ENCODE measurements at regions of chr13 and their contacts with region 1.

Region 1: DNA sequence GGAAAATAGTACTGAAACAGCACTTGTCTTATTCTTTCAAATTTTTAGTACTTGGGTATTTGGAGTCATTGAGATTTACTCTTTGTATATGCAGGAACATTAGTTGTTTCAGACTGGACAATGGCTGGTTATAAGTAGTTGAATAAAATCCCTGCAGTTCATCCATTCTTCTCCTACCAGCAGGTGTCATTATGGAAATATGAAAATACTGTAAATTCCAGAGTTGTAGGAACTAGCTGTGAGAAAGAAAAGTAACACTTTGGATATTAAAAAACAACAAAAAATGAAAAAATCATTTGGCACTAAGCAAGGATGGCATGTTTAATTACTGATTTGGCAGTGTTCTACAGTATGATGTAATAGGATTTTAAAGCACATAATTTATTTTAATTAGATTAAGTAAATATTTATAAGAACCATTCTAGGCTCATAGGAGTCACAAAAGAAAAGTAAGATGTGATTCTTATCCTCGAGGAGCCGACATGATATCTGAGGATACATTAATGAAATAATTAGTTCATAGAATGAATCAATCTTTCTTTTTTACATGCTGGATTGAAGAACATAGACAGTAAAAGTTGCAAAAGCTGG is 155.3 kb downstream of the KCNRG start:
- DNase-seq: no peak
- ATAC-seq: no peak
- H3K4me3 ChIP-seq: no peak overlapping the region
- H3K27ac ChIP-seq: no peak overlapping the region
- H3K4me1 ChIP-seq: no peaks in the 10 kb centered on the region
- H3K27me3 ChIP-seq: no peaks in the 10 kb centered on the region
- CTCF ChIP-seq: peak in 7 of 9 donors; percentile 27 to 58 (median 54)

Region 2: GRCh38 chr13:49342454-49342853 is 828.1 kb before region 1 on chr13:
- intact Hi-C with region 1: loop called in 1 of 10 experiments (anchors 5 kb)
- DNase-seq: no peak
- ATAC-seq: no peak
- H3K4me3 ChIP-seq: no peak overlapping the region
- H3K27ac ChIP-seq: no peak overlapping the region
- H3K4me1 ChIP-seq: peaks cover 0 to 7% (median 0%) of the 10 kb centered on the region in 9 donors
- H3K27me3 ChIP-seq: no peaks in the 10 kb centered on the region
- CTCF ChIP-seq: no peak

Region 3: GRCh38 chr13:49869519-49869918 is 301.0 kb before region 1 on chr13:
- intact Hi-C with region 1: no loop called
- DNase-seq: no peak
- ATAC-seq: no peak
- H3K4me3 ChIP-seq: no peak overlapping the region
- H3K27ac ChIP-seq: no peak overlapping the region
- H3K4me1 ChIP-seq: no peaks in the 10 kb centered on the region
- H3K27me3 ChIP-seq: no peaks in the 10 kb centered on the region
- CTCF ChIP-seq: peak in 5 of 9 donors; percentile 8 to 32 (median 21)

Region 4: DNA sequence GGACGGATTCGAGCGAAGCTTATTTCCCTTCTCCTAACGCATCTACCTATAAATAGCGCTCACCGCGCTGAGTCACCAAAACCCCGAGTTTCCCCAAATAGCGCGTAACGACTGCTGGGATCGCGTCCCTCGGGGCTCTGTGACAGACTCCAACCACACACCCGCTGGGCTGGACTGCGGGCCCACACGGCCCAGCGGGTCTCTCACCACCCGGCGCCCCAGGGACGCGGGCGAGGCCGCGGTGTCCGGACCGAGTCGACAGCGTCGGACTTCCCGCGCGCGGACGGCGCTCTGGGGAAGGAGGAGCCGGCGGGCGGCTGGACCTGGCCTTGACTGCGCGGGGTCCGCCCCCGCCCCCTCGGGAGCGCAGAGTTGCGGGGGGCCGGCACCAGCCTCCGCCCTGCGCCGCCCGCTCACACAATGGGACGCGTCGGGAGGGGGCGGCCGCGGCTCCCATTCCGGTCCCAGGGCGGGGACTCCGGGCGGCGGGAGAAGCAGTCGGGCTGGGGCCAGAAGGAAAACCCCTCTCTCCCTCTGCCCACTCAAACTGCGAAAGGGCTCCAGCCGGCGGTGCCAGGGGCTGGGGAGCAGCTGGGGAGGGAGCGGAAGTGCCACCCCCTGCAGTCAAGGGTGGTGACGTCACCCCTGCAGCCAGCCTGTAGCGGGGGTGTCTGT is 46.5 kb before region 1 on chr13:
- intact Hi-C with region 1: no loop called
- DNase-seq: peak; percentile 87 to 97
- ATAC-seq: peak; percentile 86 to 95 (median 92)
- H3K4me3 ChIP-seq: peak overlapping the region; percentile 51 to 98 (median 94)
- H3K27ac ChIP-seq: peak overlapping the region; percentile 94 to 100 (median 100)
- H3K4me1 ChIP-seq: peaks cover 2 to 70% (median 53%) of the 10 kb centered on the region in 9 donors
- H3K27me3 ChIP-seq: peaks cover 0 to 14% (median 5%) of the 10 kb centered on the region in 7 donors
- CTCF ChIP-seq: peak in 2 of 9 donors; percentile 23 to 43

Measured in heart right ventricle (tissue), 16 donors.